GM12878 (cell line): ENCODE measurements at regions of chr2 and their contacts with region 1.

Region 1: GRCh38 chr2:176814306-176815052 is 398.1 kb upstream of the HNRNPA3 start:
- DNase-seq: peak; percentile 8
- ATAC-seq: peak; percentile 80
- H3K4me3 ChIP-seq: no peak overlapping the region
- H3K27ac ChIP-seq: no peak overlapping the region
- H3K4me1 ChIP-seq: no peaks in the 10 kb centered on the region
- H3K27me3 ChIP-seq: no peaks in the 10 kb centered on the region
- CTCF ChIP-seq: peak; percentile 42 to 54 (median 48); a peak in 5 of 6 replicates
- EP300 ChIP-seq: no peak
- POLR2A ChIP-seq: no peak
- RAD21 ChIP-seq: peak; percentile 79

Region 2: GRCh38 chr2:176140513-176141317 is 673.8 kb before region 1 on chr2:
- CTCF ChIA-PET with region 1: interaction called, 10 read pairs
- POLR2A ChIA-PET with region 1: no interaction called
- RAD21 ChIA-PET with region 1: interaction called, 8 read pairs
- SMC1A ChIA-PET with region 1: interaction called, 3 read pairs
- in situ Hi-C with region 1: no loop called
- intact Hi-C with region 1: no loop called
- DNase-seq: peak; percentile 24
- ATAC-seq: peak; percentile 99
- H3K4me3 ChIP-seq: peak overlapping the region; percentile 37; the same call in 1 of the 2 replicates
- H3K27ac ChIP-seq: no peak overlapping the region
- H3K4me1 ChIP-seq: no peaks in the 10 kb centered on the region
- H3K27me3 ChIP-seq: peaks cover 0 to 11% of the 10 kb centered on the region in 2 experiments
- CTCF ChIP-seq: peak; percentile 75 to 93 (median 92)
- EP300 ChIP-seq: no peak
- POLR2A ChIP-seq: no peak; the same call in 1 of the 2 replicates
- RAD21 ChIP-seq: peak; percentile 95

Region 3: DNA sequence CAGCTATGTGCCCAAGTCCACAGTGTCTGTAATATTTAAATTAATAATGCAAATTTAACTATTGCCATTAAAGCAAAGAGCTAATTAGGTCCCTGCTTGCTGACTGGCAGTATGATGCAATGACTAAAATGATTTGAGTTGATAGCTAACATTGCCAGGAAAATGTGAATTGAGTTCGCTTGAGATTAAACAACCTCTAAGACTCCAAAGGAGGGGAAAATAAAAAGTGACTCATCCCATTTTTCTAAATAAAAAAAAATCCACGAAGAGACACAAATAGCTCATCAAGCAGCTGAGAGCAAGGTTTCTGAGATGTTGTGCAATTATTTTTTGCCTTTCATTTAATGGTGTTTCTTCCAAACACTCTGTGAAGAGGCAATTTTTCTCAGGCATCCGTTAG is 132.2 kb before region 1 on chr2:
- CTCF ChIA-PET with region 1: interaction called, 10 read pairs
- POLR2A ChIA-PET with region 1: no interaction called
- RAD21 ChIA-PET with region 1: interaction called, 5 read pairs
- SMC1A ChIA-PET with region 1: interaction called, 8 read pairs
- in situ Hi-C with region 1: no loop called
- intact Hi-C with region 1: loop called (anchors 5 kb)
- DNase-seq: no peak
- ATAC-seq: no peak
- H3K4me3 ChIP-seq: no peak overlapping the region
- H3K27ac ChIP-seq: no peak overlapping the region
- H3K4me1 ChIP-seq: no peaks in the 10 kb centered on the region
- H3K27me3 ChIP-seq: no peaks in the 10 kb centered on the region
- CTCF ChIP-seq: no peak
- EP300 ChIP-seq: no peak
- POLR2A ChIP-seq: no peak
- RAD21 ChIP-seq: no peak

Region 4: GRCh38 chr2:176781570-176782217 is 32.8 kb before region 1 on chr2:
- CTCF ChIA-PET with region 1: interaction called, 5 read pairs
- POLR2A ChIA-PET with region 1: no interaction called
- RAD21 ChIA-PET with region 1: interaction called, 3 read pairs
- SMC1A ChIA-PET with region 1: interaction called, 13 read pairs
- in situ Hi-C with region 1: no loop called
- intact Hi-C with region 1: no loop called
- DNase-seq: no peak
- ATAC-seq: no peak
- H3K4me3 ChIP-seq: no peak overlapping the region
- H3K27ac ChIP-seq: no peak overlapping the region
- H3K4me1 ChIP-seq: no peaks in the 10 kb centered on the region
- H3K27me3 ChIP-seq: no peaks in the 10 kb centered on the region
- CTCF ChIP-seq: no peak
- EP300 ChIP-seq: no peak
- POLR2A ChIP-seq: no peak
- RAD21 ChIP-seq: no peak

Region 5: GRCh38 chr2:176789751-176790150 is 24.7 kb before region 1 on chr2:
- CTCF ChIA-PET with region 1: interaction called, 11 read pairs
- POLR2A ChIA-PET with region 1: no interaction called
- RAD21 ChIA-PET with region 1: interaction called, 3 read pairs
- SMC1A ChIA-PET with region 1: interaction called, 3 read pairs
- in situ Hi-C with region 1: no loop called
- intact Hi-C with region 1: no loop called
- DNase-seq: no peak
- ATAC-seq: no peak
- H3K4me3 ChIP-seq: no peak overlapping the region
- H3K27ac ChIP-seq: no peak overlapping the region
- H3K4me1 ChIP-seq: no peaks in the 10 kb centered on the region
- H3K27me3 ChIP-seq: no peaks in the 10 kb centered on the region
- CTCF ChIP-seq: no peak
- EP300 ChIP-seq: no peak
- POLR2A ChIP-seq: no peak
- RAD21 ChIP-seq: no peak

Region 6: DNA sequence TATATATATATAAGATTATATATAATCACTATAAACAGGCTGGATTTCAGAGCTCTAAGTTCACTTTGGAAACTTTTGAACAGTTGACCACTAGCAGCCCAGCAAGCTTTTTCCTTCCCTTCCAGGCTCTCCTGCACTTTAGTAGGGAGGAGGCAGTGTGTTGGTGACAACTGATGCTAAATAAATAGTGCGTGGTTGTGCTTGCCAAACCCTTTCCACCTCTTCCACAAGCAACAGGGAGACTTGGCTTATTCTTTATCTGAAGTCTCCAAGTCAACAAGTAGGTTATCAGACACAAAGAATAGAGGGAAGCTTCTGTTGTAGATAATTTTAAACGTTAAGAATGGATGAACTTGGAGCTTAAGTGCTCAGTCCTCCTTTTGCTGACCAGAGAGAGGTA is 10.1 kb before region 1 on chr2:
- CTCF ChIA-PET with region 1: interaction called, 37 read pairs
- POLR2A ChIA-PET with region 1: no interaction called
- RAD21 ChIA-PET with region 1: no interaction called
- SMC1A ChIA-PET with region 1: interaction called, 14 read pairs
- in situ Hi-C with region 1: no loop called
- intact Hi-C with region 1: no loop called
- DNase-seq: no peak
- ATAC-seq: no peak
- H3K4me3 ChIP-seq: no peak overlapping the region
- H3K27ac ChIP-seq: no peak overlapping the region
- H3K4me1 ChIP-seq: no peaks in the 10 kb centered on the region
- H3K27me3 ChIP-seq: no peaks in the 10 kb centered on the region
- CTCF ChIP-seq: no peak
- EP300 ChIP-seq: no peak
- POLR2A ChIP-seq: no peak
- RAD21 ChIP-seq: no peak

Region 7: DNA sequence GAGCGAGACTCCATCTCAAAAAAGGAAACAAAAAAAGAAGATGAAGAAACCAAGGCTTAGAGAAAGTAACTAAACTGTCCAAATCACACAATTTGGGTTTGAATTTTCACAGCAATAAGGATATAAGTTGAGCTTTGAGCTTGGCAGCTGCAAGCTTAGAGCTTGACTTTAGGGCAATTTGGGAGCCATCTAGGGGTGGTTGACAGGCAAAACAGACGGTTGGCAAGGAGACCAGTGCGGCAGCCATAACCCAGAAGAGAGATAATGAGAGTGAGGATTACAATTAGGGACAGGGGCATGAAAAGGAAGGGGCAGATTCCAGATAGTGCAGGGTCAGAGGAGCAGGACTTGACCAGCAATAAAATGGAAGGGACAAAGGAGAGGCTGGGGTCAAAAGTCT is 15.9 kb after region 1 on chr2:
- CTCF ChIA-PET with region 1: interaction called, 49 read pairs
- POLR2A ChIA-PET with region 1: interaction called, 3 read pairs
- RAD21 ChIA-PET with region 1: interaction called, 6 read pairs
- SMC1A ChIA-PET with region 1: interaction called, 40 read pairs
- in situ Hi-C with region 1: no loop called
- intact Hi-C with region 1: no loop called
- DNase-seq: no peak
- ATAC-seq: peak; percentile 80
- H3K4me3 ChIP-seq: no peak overlapping the region
- H3K27ac ChIP-seq: no peak overlapping the region
- H3K4me1 ChIP-seq: no peaks in the 10 kb centered on the region
- H3K27me3 ChIP-seq: no peaks in the 10 kb centered on the region
- CTCF ChIP-seq: peak in 2 of 3 experiments; percentile 20 to 21; a peak in 3 of 6 replicates
- EP300 ChIP-seq: no peak
- POLR2A ChIP-seq: no peak
- RAD21 ChIP-seq: no peak